Activated B cell treated with CpG ODN at 0.5 μM for 24 hours (primary cell): ENCODE measurements at regions of chr17 and their contacts with region 1.

Region 1: DNA sequence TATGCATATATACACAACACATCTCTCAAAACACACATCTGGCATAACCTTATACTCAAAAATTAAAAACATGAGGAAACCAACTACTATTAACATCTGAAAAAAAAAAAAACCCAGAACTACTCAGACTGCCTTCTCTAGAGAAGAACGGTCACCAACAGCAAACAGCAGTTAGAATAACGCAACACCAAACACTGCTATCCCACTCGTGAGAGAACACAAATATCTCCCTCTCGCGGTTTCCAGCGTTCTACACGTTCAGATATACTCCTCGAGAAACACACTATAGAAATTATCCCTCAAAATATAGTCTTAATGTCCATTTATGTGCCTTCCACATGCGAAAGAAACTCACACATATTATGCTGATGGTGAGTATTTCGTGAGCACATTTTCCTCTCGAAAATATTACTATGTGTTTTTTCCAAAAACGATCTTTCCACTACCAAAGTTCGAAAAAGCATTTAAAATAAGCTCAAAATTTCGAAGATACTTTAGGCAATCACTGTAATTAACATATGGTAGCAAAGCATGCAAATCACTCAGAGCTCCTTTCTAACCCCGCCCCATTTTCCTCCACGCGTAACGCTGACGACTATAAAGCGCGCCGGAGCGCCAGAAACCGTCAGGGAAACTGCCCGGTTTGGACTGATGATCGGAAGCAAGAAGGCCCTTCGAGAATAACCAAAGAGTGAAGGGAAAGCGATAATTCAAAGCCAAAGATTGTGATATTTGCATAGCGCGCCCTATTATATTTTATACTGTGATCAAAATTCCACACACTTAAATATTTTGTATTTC is 60.1 kb downstream of the TEX14 start:
- DNase-seq: peak; percentile 91
- ATAC-seq: peak; percentile 83
- H3K4me3 Mint-ChIP-seq: no peak overlapping the region
- H3K27ac Mint-ChIP-seq: no peak overlapping the region
- H3K4me1 Mint-ChIP-seq: peaks cover 3% of the 10 kb centered on the region
- H3K27me3 Mint-ChIP-seq: no peaks in the 10 kb centered on the region
- CTCF ChIP-seq: no peak

Region 2: DNA sequence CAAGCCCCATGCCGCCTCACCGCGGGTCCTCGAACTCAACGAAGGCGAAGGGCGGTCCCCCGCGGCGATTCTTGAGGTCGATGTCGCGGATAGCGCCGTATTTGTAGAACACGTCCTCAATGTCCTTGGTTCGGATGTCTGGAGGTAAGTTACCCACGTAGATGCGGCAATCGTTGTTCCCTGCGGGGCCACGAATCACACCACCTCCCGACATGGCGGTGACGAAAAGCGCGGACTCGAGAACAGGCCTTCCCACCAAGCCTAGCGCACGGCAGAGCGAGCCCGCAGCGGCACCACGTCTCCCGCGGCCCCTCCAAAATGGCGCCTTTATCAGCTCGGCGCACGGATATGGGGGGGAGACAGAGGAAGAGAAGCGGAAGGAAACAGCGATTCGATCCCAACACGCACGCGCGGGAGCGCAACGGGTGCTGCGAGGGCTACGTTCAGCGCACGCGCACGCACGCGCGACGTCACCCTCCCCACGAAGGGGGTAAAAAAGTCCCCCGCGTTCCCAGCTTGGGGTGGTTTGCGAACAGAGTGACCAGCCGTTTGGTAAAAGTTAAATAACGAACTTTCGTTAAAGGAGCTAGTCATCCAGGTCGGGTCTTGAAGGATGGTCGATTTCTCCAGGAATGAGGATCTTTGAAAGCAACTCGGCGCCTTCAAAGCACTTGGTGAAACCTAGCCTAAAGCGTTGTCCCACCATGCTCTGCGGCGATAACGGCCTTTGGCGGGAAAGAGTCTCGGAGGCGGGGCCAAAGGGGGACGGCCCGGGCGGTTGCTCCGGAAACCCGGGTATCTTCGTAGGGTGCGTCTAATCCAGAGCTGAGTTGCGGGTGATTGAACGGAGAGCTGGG is 624.6 kb before region 1 on chr17 and contains the start of gene SRSF1:
- CTCF ChIA-PET with region 1: no interaction called
- POLR2A ChIA-PET with region 1: interaction called, 9 read pairs
- intact Hi-C with region 1: loop called (anchors 2 kb)
- DNase-seq: peak; percentile 95
- ATAC-seq: peak; percentile 89
- H3K4me3 Mint-ChIP-seq: peak within 1 kb of the TSS; percentile 100
- H3K27ac Mint-ChIP-seq: peak within 1 kb of the TSS; percentile 99
- H3K4me1 Mint-ChIP-seq: peaks cover 53% of the 10 kb centered on the region
- H3K27me3 Mint-ChIP-seq: peaks cover 3% of the 10 kb centered on the region
- CTCF ChIP-seq: no peak
- total RNA-seq, gene SRSF1: 288 and 289 TPM in 2 replicates

Region 3: GRCh38 chr17:58344047-58344790 is 287.5 kb before region 1 on chr17:
- CTCF ChIA-PET with region 1: no interaction called
- POLR2A ChIA-PET with region 1: interaction called, 48 read pairs
- intact Hi-C with region 1: loop called (anchors 5 kb)
- DNase-seq: peak; percentile 71
- ATAC-seq: peak; percentile 83
- H3K4me3 Mint-ChIP-seq: peak overlapping the region; percentile 83
- H3K27ac Mint-ChIP-seq: peak overlapping the region; percentile 99
- H3K4me1 Mint-ChIP-seq: peaks cover 91% of the 10 kb centered on the region
- H3K27me3 Mint-ChIP-seq: no peaks in the 10 kb centered on the region
- CTCF ChIP-seq: no peak

Region 4: DNA sequence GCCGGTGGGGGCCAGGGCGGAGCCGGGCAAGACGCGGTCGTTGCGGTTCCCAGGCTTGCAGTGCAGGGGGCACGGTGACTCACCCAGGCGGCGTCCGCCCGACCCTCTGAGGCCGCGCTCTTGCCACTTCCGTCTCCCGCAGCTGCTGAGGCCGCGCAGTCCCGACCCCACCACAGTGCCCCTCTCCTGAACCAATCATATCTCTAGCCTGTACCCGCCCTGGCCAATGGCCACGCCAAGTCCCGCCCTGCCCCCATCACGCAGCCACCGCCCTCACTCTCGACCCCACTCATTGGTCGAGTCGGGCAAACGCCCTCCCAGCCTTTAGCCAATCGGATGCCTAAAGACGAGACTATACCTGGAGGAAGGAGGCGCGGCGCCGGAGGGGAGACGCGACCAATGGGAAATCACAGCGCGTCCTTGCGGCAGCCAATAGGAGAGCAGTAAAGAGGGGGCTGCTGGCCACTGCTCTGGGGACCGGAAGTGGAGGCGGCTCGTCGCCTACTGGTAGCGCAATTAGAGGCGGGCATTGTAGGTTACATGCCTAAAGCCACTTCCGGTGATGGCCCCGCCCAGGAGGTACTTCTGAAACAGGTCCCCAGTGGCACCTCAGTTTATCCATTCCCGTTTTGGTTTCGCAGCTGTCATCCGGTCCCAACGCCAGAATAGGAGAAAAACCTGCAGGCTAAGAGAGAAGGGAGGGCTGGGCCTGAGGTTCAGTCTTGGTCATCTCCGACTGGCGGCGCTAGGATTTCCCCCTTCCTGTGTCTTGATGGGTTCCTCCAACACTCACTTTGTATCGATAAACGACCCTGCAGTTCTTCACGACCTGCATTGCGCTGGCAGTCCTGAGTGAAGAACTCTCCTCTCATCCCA is 113.8 kb before region 1 on chr17:
- CTCF ChIA-PET with region 1: interaction called, 12 read pairs
- POLR2A ChIA-PET with region 1: interaction called, 214 read pairs
- intact Hi-C with region 1: loop called (anchors 1 kb)
- DNase-seq: peak; percentile 95
- ATAC-seq: peak; percentile 79
- H3K4me3 Mint-ChIP-seq: peak overlapping the region; percentile 96
- H3K27ac Mint-ChIP-seq: peak overlapping the region; percentile 97
- H3K4me1 Mint-ChIP-seq: peaks cover 46% of the 10 kb centered on the region
- H3K27me3 Mint-ChIP-seq: no peaks in the 10 kb centered on the region
- CTCF ChIP-seq: no peak

Region 5: DNA sequence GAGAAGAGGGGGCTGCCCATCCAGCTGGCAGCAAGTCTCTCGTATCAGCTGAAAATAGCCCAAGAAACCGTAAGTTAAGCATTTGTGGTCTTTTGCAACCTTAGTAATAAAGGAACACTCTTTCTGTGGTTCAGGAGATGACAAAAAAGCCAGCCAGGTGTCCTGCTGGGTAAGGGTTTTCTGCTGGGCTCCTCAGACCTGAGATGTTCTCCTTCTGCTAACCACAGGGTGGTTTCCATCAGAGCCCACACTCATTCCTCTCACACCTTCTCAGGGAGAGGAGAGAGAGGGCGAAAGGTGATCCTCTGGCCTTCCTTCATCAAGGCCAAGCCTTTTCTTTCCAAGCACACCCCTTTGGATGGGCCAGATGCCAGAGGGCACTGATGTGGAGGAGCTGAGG is 10.5 kb before region 1 on chr17:
- CTCF ChIA-PET with region 1: no interaction called
- POLR2A ChIA-PET with region 1: interaction called, 27 read pairs
- intact Hi-C with region 1: no loop called
- DNase-seq: no peak
- ATAC-seq: no peak
- H3K4me3 Mint-ChIP-seq: no peak overlapping the region
- H3K27ac Mint-ChIP-seq: no peak overlapping the region
- H3K4me1 Mint-ChIP-seq: no peaks in the 10 kb centered on the region
- H3K27me3 Mint-ChIP-seq: no peaks in the 10 kb centered on the region
- CTCF ChIP-seq: no peak

Region 6: DNA sequence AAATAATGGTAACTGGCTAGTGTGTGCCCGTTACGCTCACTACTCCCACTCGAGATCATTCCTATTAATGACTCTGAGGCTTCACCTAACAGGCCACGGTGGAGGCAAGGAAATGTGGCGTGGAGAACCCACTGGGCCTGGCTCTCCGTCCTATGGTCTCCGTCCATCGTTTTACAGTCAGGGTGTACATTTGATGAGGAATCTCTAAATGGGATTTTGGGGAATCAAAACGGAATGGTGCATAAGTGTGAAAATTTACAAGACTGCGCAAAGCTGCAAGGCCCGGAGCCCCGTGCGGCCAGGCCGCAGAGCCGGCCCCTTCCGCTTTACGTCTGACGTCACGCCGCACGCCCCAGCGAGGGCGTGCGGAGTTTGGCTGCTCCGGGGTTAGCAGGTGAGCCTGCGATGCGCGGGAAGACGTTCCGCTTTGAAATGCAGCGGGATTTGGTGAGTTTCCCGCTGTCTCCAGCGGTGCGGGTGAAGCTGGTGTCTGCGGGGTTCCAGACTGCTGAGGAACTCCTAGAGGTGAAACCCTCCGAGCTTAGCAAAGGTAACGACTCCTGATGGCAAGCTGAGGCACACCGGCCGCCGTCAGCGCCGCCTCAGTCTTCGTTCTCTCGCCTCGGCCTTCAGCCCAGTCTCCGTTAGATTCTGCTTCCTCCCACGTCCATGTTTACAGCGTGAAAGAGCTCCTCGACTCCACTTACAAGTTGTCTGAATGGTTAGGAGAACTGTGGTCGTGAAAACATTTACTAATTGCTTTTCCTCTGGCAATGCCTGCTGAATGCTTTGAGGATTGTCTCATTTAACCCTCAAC is 60.7 kb after region 1 on chr17 and contains the start of gene RAD51C:
- CTCF ChIA-PET with region 1: no interaction called
- POLR2A ChIA-PET with region 1: interaction called, 82 read pairs
- intact Hi-C with region 1: loop called (anchors 1 kb)
- DNase-seq: peak; percentile 83
- ATAC-seq: peak; percentile 98
- H3K4me3 Mint-ChIP-seq: peak within 1 kb of the TSS; percentile 94
- H3K27ac Mint-ChIP-seq: peak within 1 kb of the TSS; percentile 89
- H3K4me1 Mint-ChIP-seq: peaks cover 22% of the 10 kb centered on the region
- H3K27me3 Mint-ChIP-seq: no peaks in the 10 kb centered on the region
- CTCF ChIP-seq: no peak
- total RNA-seq, gene RAD51C: 32.8 and 36.8 TPM in 2 replicates

Region 7: DNA sequence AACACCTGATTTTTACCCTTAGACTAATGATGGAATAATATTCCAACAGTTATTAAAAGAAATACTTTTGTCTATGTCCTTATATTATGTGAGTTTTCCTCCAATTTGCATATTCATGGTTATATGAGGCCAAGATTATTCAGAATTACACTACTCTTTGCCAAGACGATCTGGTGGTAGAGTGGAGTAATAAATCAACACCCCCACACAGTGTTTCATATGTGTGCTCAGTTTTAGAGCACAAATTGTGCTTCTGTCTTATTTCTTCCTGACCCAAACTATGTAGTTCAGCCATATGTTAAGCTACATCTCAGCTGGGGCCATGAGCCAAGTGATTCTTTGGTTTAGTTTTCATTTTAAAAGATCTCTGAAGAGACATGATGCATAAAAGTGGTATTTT is 97.1 kb after region 1 on chr17:
- CTCF ChIA-PET with region 1: no interaction called
- POLR2A ChIA-PET with region 1: no interaction called
- intact Hi-C with region 1: no loop called
- DNase-seq: no peak
- ATAC-seq: no peak
- H3K4me3 Mint-ChIP-seq: no peak overlapping the region
- H3K27ac Mint-ChIP-seq: no peak overlapping the region
- H3K4me1 Mint-ChIP-seq: no peaks in the 10 kb centered on the region
- H3K27me3 Mint-ChIP-seq: no peaks in the 10 kb centered on the region
- CTCF ChIP-seq: no peak

Region 8: GRCh38 chr17:59155439-59156182 is 523.9 kb after region 1 on chr17 and contains the start of gene PRR11:
- CTCF ChIA-PET with region 1: no interaction called
- POLR2A ChIA-PET with region 1: interaction called, 11 read pairs
- intact Hi-C with region 1: loop called (anchors 1 kb)
- DNase-seq: peak; percentile 65
- ATAC-seq: peak; percentile 88
- H3K4me3 Mint-ChIP-seq: no peak within 1 kb of the TSS
- H3K27ac Mint-ChIP-seq: no peak within 1 kb of the TSS
- H3K4me1 Mint-ChIP-seq: peaks cover 16% of the 10 kb centered on the region
- H3K27me3 Mint-ChIP-seq: no peaks in the 10 kb centered on the region
- CTCF ChIP-seq: no peak
- total RNA-seq, gene PRR11: 2.4 and 4.8 TPM in 2 replicates